Activated CD4-positive, alpha-beta memory T cell treated with anti-CD3 and anti-CD28 coated beads for 36 hours (primary cell): ENCODE measurements at regions of chr6 and their contacts with region 1.

Region 1: GRCh38 chr6:125995972-125996580 is 9.7 kb downstream of the TRMT11 start:
- DNase-seq: peak; percentile 74
- H3K4me3 Mint-ChIP-seq: no peak overlapping the region
- H3K27ac Mint-ChIP-seq: no peak overlapping the region
- H3K4me1 Mint-ChIP-seq: peaks cover 28% of the 10 kb centered on the region
- H3K27me3 Mint-ChIP-seq: no peaks in the 10 kb centered on the region

Region 2: DNA sequence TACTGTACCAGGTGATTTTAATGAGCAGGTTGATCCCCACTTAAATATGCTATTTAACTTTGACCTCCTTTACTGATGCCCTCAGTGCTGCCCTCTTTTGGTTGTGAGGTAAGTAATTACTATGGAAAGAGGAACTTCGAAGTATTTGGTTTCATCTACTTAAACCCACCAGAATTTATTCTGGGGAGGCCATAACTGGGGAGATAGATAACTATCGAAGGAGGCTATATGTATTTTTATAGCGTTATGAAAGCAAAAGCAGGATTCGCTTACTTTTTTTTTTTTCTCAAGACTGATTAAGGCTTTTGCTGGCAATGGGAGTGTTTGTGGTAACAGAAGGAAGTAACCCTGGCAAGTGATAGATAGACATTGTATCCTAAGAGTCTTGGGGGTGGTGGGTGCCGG is 174.9 kb after region 1 on chr6:
- CTCF ChIA-PET with region 1: interaction called, 3 read pairs
- POLR2A ChIA-PET with region 1: no interaction called
- intact Hi-C with region 1: loop called (anchors 1 kb)
- DNase-seq: no peak
- H3K4me3 Mint-ChIP-seq: no peak overlapping the region
- H3K27ac Mint-ChIP-seq: no peak overlapping the region
- H3K4me1 Mint-ChIP-seq: peaks cover 4% of the 10 kb centered on the region
- H3K27me3 Mint-ChIP-seq: no peaks in the 10 kb centered on the region

Region 3: GRCh38 chr6:126339796-126340609 is 343.9 kb after region 1 on chr6 and contains the start of gene CENPW:
- CTCF ChIA-PET with region 1: no interaction called
- POLR2A ChIA-PET with region 1: no interaction called
- intact Hi-C with region 1: loop called (anchors 5 kb)
- DNase-seq: peak; percentile 97
- H3K4me3 Mint-ChIP-seq: no peak within 1 kb of the TSS
- H3K27ac Mint-ChIP-seq: peak within 1 kb of the TSS; percentile 3
- H3K4me1 Mint-ChIP-seq: peaks cover 15% of the 10 kb centered on the region
- H3K27me3 Mint-ChIP-seq: no peaks in the 10 kb centered on the region
- total RNA-seq, gene CENPW: 75.1 to 84.7 TPM

Region 4: DNA sequence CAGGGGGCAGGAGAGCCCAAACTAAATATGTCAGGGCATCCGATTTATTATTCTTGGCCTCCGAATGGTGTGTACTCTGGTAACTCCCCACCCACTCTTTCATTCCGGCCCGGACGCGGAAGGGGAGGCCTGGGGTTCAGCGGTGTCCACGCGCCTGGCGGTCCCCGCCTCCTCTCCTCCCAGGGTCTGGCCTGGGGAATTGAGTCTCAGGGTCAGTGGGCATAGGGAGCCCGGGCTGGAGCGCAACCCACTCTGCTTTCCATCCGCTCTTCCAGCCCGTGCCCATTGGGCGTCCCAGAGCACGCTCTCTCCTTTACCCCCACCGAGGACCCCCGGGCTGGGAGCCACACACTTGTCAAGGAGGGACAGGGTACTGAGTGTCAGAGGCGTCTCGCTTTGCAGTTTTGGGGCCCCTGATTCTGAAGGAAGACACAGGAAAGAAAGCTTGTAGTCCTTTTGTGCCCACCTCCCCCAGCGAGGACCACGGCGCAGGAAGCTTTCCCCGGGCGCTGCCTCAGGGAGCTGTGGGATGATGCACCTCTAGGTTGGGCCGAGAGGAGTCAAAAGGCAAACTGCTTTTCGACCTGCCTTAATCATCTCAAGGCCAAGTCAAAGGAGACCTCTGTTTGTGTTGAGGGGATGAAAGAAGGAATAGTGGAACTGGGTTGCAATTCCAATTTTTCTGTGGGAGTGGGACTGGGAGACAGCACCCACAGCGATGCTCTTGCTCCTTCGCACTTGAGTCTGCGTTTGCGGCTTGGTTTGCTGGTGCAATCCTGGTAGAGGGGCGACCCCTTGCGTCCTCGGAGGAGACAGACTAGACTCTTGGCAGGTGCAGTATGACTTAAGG is 1124.9 kb after region 1 on chr6:
- CTCF ChIA-PET with region 1: interaction called, 6 read pairs
- POLR2A ChIA-PET with region 1: no interaction called
- intact Hi-C with region 1: loop called (anchors 1 kb)
- DNase-seq: peak; percentile 86
- H3K4me3 Mint-ChIP-seq: no peak overlapping the region
- H3K27ac Mint-ChIP-seq: no peak overlapping the region
- H3K4me1 Mint-ChIP-seq: peaks cover 24% of the 10 kb centered on the region
- H3K27me3 Mint-ChIP-seq: peaks cover 57% of the 10 kb centered on the region

Region 5: DNA sequence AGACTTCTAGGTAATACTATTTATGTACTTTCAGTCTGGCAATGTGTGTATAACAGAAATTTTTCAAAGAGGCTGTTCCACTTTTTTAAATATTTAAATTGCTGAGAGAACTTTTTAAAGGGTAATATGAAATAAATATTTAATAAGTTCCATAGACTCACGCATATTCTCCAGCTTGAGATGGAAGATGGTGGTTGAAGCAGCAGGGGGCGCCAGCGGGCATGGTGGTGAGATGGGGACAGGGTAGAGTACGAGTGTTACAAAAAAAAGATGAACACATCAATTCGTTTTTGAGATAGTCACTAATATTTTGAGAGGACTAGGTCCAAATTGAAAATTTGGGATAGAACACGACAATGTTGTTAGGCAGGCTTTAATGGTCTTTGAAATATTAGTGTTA is 1190.8 kb after region 1 on chr6:
- CTCF ChIA-PET with region 1: interaction called, 5 read pairs
- POLR2A ChIA-PET with region 1: no interaction called
- intact Hi-C with region 1: loop called (anchors 10 kb)
- DNase-seq: peak; percentile 78
- H3K4me3 Mint-ChIP-seq: no peak overlapping the region
- H3K27ac Mint-ChIP-seq: no peak overlapping the region
- H3K4me1 Mint-ChIP-seq: no peaks in the 10 kb centered on the region
- H3K27me3 Mint-ChIP-seq: no peaks in the 10 kb centered on the region